ENCODE measurements at regions of chr4 and their contacts with region 1.

Region 1: GRCh38 chr4:129362674-129363274 is 266.8 kb downstream of the C4orf33 start:
- DNase-seq: peak; percentile 26 to 67
- ATAC-seq: peak; percentile 65

Region 2: GRCh38 chr4:129641179-129641578 is 278.4 kb after region 1 on chr4:
- intact Hi-C with region 1: loop called in 1 of 2 experiments (anchors 5 kb)
- DNase-seq: peak; percentile 29 to 56
- ATAC-seq: peak; percentile 32

Region 3: DNA sequence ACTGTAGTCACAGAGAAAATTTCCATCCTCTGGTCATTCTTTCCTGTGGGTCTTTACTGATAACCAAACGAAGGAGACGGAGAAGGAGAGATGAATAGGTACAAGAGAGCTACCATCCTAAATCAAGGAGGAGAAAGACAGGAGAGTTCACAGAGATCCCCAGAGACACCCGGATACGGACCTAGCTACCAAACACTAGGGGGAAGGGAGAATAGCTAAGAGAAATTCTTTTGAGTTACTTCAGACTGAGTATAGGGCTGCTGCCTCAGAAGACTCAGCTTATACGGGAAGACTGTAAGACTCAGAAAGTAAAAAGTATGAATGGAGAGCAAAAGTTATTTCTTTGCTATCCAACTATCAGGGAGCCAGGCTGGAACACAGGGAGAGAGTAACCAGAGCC is 305.3 kb after region 1 on chr4:
- intact Hi-C with region 1: no loop called
- DNase-seq: no peak
- ATAC-seq: no peak